OCI-LY7 (cell line): ENCODE measurements at regions of chr13 and their contacts with region 1.

Region 1: GRCh38 chr13:24982333-24982999 is 113.5 kb upstream of the PABPC3 start:
- DNase-seq: no peak
- H3K4me3 ChIP-seq: no peak overlapping the region
- H3K27ac ChIP-seq: no peak overlapping the region
- H3K4me1 ChIP-seq: no peaks in the 10 kb centered on the region
- CTCF ChIP-seq: no peak

Region 2: GRCh38 chr13:24683838-24684599 is 298.4 kb before region 1 on chr13:
- CTCF ChIA-PET with region 1: no interaction called
- POLR2A ChIA-PET with region 1: no interaction called
- intact Hi-C with region 1: loop called (anchors 10 kb)
- DNase-seq: peak; percentile 84
- H3K4me3 ChIP-seq: peak overlapping the region; percentile 31
- H3K27ac ChIP-seq: peak overlapping the region; percentile 56
- H3K4me1 ChIP-seq: peaks cover 30% of the 10 kb centered on the region
- CTCF ChIP-seq: peak; percentile 95

Region 3: DNA sequence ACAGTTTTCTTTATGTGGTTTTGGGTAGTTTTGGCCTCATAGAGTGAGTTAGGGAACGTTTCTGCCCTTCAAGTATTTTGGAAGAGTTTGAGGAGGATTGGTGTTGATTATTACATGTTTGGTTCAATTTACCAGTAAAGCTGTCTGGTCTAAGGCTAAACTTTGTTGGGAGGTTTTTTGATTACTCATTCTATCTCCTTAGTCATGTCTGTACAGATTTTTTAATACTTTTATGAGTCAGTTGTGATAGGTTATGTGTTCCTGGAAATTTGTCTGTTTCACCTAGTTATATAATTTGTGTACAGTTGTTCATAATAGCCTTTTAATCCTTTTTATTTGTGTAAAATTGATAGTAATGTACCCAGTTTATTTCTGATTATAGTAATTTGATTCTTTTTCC is 198.1 kb before region 1 on chr13:
- CTCF ChIA-PET with region 1: interaction called, 10 read pairs
- POLR2A ChIA-PET with region 1: interaction called, 3 read pairs
- intact Hi-C with region 1: no loop called
- DNase-seq: no peak
- H3K4me3 ChIP-seq: no peak overlapping the region
- H3K27ac ChIP-seq: no peak overlapping the region
- H3K4me1 ChIP-seq: no peaks in the 10 kb centered on the region
- CTCF ChIP-seq: no peak

Region 4: GRCh38 chr13:26095338-26095737 is 1112.9 kb after region 1 on chr13:
- CTCF ChIA-PET with region 1: no interaction called
- POLR2A ChIA-PET with region 1: no interaction called
- intact Hi-C with region 1: no loop called
- DNase-seq: no peak
- H3K4me3 ChIP-seq: no peak overlapping the region
- H3K27ac ChIP-seq: no peak overlapping the region
- H3K4me1 ChIP-seq: no peaks in the 10 kb centered on the region
- CTCF ChIP-seq: 0 out of 2 replicates have a peak, but pooled peaks have one; percentile 32